ENCODE measurements at regions of chr9 and their contacts with region 1.

Region 1: GRCh38 chr9:34072868-34073590 is 24.3 kb upstream of the UBAP2 start:
- DNase-seq: peak; percentile 51
- H3K4me3 Mint-ChIP-seq: peak overlapping the region; percentile 9
- H3K27ac Mint-ChIP-seq: no peak overlapping the region
- H3K4me1 Mint-ChIP-seq: peaks cover 22% of the 10 kb centered on the region
- H3K27me3 Mint-ChIP-seq: no peaks in the 10 kb centered on the region
- CTCF ChIP-seq: no peak

Region 2: GRCh38 chr9:34010979-34011378 is 62.0 kb before region 1 on chr9:
- CTCF ChIA-PET with region 1: no interaction called
- intact Hi-C with region 1: loop called (anchors 5 kb)
- DNase-seq: no peak
- H3K4me3 Mint-ChIP-seq: no peak overlapping the region
- H3K27ac Mint-ChIP-seq: no peak overlapping the region
- H3K4me1 Mint-ChIP-seq: no peaks in the 10 kb centered on the region
- H3K27me3 Mint-ChIP-seq: no peaks in the 10 kb centered on the region
- CTCF ChIP-seq: no peak

Region 3: DNA sequence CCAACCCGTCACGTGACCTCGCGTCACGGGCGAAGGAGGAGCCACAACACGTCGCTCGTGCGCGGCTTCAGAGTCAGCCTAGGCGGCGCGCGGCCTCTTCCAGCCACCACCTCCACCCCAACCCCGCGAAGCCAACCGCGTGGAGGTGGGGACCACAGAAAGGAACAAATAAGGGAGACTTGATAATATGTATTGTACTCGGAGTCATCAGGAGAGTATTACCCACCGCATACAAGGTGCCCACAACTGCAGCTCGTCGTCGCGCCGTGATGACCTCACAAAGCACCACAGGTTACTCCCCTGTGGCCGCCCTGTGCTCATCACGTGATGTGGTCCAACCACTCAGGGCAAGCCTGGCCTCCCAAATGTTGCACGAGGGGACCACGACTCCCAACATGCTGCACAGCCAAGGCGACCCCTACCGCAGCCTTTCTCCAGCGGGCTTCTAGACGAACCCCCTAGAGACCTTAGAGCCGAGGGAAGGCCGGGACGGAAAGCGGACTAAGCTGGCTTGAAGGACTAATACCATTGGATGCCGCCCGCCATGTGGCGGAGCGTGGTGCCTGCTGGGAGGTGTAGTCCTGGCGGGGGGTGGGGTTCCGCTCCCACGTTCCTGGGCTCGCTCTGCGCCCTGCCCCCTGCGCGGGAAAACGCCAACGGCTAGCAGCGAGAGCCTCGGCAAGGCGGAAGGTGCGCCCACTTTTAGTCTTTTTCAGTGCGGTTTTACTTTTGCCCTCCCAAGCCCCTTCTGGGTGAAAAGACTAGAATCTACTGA is 23.9 kb before region 1 on chr9:
- CTCF ChIA-PET with region 1: interaction called, 15 read pairs
- intact Hi-C with region 1: no loop called
- DNase-seq: peak; percentile 93
- H3K4me3 Mint-ChIP-seq: peak overlapping the region; percentile 94
- H3K27ac Mint-ChIP-seq: peak overlapping the region; percentile 99
- H3K4me1 Mint-ChIP-seq: peaks cover 17% of the 10 kb centered on the region
- H3K27me3 Mint-ChIP-seq: no peaks in the 10 kb centered on the region
- CTCF ChIP-seq: no peak

Region 4: GRCh38 chr9:34185778-34186551 is 112.9 kb after region 1 on chr9:
- CTCF ChIA-PET with region 1: no interaction called
- intact Hi-C with region 1: loop called (anchors 5 kb)
- DNase-seq: peak; percentile 36
- H3K4me3 Mint-ChIP-seq: peak overlapping the region; percentile 19
- H3K27ac Mint-ChIP-seq: peak overlapping the region; percentile 42
- H3K4me1 Mint-ChIP-seq: peaks cover 15% of the 10 kb centered on the region
- H3K27me3 Mint-ChIP-seq: no peaks in the 10 kb centered on the region
- CTCF ChIP-seq: no peak

Region 5: GRCh38 chr9:34777666-34778065 is 704.6 kb after region 1 on chr9:
- CTCF ChIA-PET with region 1: no interaction called
- intact Hi-C with region 1: no loop called
- DNase-seq: no peak
- H3K4me3 Mint-ChIP-seq: no peak overlapping the region
- H3K27ac Mint-ChIP-seq: no peak overlapping the region
- H3K4me1 Mint-ChIP-seq: no peaks in the 10 kb centered on the region
- H3K27me3 Mint-ChIP-seq: peaks cover 21% of the 10 kb centered on the region
- CTCF ChIP-seq: no peak